AG04449 (cell line): ENCODE measurements at regions of chr7 and their contacts with region 1.

Region 1: GRCh38 chr7:45985902-45986301 is 64.8 kb upstream of the IGFBP3 start:
- DNase-seq: no peak
- H3K4me3 ChIP-seq: no peak overlapping the region
- CTCF ChIP-seq: no peak

Region 2: DNA sequence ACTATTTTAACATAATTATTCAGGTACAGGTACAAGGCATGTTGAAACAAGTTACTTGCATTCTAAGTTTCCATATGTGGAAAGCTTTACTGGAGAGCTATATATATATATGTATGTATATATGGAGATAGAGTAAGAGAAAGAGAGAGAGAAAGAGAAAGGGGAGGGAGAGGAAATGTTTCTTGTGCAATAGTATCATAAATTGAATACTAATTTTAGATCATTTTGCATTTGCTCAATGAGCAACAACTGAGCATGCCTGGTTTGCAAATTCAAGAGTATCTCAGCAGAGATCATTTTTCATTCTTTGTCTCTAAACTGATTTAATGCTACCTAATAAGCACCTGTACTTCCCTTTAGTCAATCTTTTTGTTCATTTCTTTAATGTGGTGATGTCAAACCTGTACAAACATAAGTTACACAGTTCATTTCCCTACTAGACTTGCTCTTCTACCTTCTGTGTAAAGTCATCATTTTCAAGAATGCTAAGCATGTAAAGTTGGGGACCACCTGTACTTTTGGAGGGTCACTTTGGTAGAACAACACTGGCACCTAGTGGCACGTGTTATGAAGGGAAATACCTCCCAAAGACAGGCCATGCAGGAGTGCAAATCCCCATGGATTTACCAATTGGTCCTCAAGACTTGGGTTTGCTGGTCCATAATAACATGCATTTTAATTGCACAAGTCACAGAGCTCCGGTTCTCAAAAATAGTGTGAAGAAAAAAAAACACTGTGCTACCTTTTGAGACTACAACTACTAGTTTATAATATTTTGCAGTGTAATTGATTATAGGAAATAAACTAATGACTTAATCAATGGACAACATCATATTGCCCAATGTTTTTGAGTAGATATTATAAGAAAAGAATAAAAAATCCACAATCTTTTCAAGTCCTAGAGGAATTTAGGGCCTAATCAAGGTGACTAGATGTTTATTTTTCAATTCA is 366.4 kb after region 1 on chr7:
- CTCF ChIA-PET with region 1: interaction called, 13 read pairs
- POLR2A ChIA-PET with region 1: no interaction called
- DNase-seq: no peak
- H3K4me3 ChIP-seq: no peak overlapping the region
- CTCF ChIP-seq: peak; percentile 67